ENCODE measurements at regions of chr14 and their contacts with region 1.

Region 1: GRCh38 chr14:60106339-60106738 is 14.6 kb downstream of the PCNX4 start:
- DNase-seq: peak in 1 of 5 donors; percentile 16
- ATAC-seq: peak in 3 of 4 donors; percentile 68 to 75 (median 74)
- H3K4me3 ChIP-seq: no peak overlapping the region
- H3K27ac ChIP-seq: peak overlapping the region in 3 of 12 donors; percentile 3 to 50 (median 28)
- H3K4me1 ChIP-seq: peaks cover 0 to 51% (median 30%) of the 10 kb centered on the region in 12 donors
- H3K27me3 ChIP-seq: no peaks in the 10 kb centered on the region
- CTCF ChIP-seq: no peak
- POLR2A ChIP-seq: no peak

Region 2: GRCh38 chr14:59961518-59962062 is 144.7 kb before region 1 on chr14:
- intact Hi-C with region 1: no loop called
- DNase-seq: no peak
- ATAC-seq: no peak
- H3K4me3 ChIP-seq: no peak overlapping the region
- H3K27ac ChIP-seq: no peak overlapping the region
- H3K4me1 ChIP-seq: peaks cover 0 to 4% (median 0%) of the 10 kb centered on the region in 12 donors
- H3K27me3 ChIP-seq: peaks cover 0 to 11% (median 0%) of the 10 kb centered on the region in 9 donors
- CTCF ChIP-seq: no peak
- POLR2A ChIP-seq: no peak

Region 3: DNA sequence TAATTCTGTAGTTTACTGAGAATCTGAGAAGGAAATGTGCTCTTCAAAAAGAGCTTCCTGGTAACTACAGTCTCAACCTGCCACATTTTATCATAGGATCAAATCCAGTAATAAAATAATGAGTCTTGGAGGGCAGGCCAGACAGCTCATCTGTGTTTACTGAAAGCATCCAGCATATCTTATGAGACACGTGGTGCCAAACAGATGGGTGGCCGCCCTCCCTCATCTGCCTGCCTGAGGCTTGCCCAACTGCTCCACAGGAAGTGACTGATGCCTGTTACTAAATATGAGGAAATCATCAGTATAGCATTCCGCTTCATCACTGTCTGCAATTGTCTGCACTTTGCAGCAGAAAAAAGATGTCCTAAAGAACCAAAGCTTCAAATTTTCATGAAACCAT is 45.4 kb after region 1 on chr14:
- intact Hi-C with region 1: loop called in 3 of 10 experiments (anchors 5 to 10 kb)
- DNase-seq: peak; percentile 56 to 85 (median 78)
- ATAC-seq: peak; percentile 84 to 94 (median 94)
- H3K4me3 ChIP-seq: no peak overlapping the region
- H3K27ac ChIP-seq: peak overlapping the region in 7 of 12 donors; percentile 10 to 78 (median 18)
- H3K4me1 ChIP-seq: peaks cover 0 to 42% (median 16%) of the 10 kb centered on the region in 12 donors
- H3K27me3 ChIP-seq: no peaks in the 10 kb centered on the region
- CTCF ChIP-seq: no peak
- POLR2A ChIP-seq: no peak

Measured in heart left ventricle (tissue), 16 donors.